Right cardiac atrium (tissue), 5 donors: ENCODE measurements at regions of chr9 and their contacts with region 1.

Region 1: GRCh38 chr9:84002344-84002743 is 21.7 kb downstream of the RMI1 start:
- DNase-seq: no peak
- ATAC-seq: no peak
- H3K4me3 ChIP-seq: no peak overlapping the region
- H3K27ac ChIP-seq: no peak overlapping the region
- H3K4me1 ChIP-seq: no peaks in the 10 kb centered on the region
- H3K27me3 ChIP-seq: no peaks in the 10 kb centered on the region

Region 2: GRCh38 chr9:84054341-84055010 is 52.1 kb after region 1 on chr9:
- intact Hi-C with region 1: loop called in 1 of 4 experiments (anchors 10 kb)
- DNase-seq: no peak
- ATAC-seq: peak; percentile 34 to 64
- H3K4me3 ChIP-seq: no peak overlapping the region
- H3K27ac ChIP-seq: no peak overlapping the region
- H3K4me1 ChIP-seq: no peaks in the 10 kb centered on the region
- H3K27me3 ChIP-seq: no peaks in the 10 kb centered on the region